ENCODE measurements at regions of chr20 and their contacts with region 1.

Region 1: DNA sequence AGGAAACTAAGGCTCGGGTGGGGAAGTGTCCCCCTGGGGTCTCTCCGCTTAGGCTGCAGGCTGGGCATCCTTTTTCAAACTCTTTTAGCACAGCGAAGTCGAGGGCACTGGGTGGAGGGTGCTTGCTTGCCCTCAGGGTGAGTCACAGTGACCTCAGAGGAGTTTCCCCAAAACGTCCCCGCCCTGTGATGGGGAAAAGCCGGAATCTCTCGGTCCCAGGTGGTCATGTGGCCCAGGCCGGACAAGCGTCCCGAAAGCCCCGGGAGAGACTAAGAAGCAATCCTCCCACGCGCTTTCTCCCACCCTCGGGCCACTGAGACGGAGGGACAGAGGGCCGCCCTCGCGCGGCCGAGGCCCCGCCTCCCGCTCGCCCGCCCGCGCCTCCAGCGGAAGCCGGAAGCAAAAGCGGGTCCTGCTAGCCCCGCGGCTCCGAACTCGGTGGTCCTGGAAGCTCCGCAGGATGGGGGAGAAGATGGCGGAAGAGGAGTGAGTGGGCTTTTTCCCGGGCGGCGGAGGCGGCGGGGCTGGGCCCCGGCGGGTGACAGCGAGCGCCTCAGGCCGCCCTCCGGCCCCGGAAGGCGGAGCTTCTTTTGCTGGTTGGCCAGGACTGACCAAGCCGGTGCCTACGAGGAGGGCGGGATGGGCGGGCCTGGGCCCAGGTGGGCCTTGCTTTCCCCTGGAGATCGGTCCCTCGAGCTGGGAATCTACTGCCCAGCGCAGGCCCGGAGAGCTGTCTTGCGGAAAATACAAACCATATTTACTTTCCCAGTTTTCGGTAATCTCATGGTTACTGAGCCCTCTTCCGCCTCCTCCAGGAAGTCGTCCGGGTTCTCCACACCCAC is at the start of gene SLC9A8:
- DNase-seq: peak; percentile 92
- H3K4me3 Mint-ChIP-seq: peak within 1 kb of the TSS; percentile 94
- H3K27ac Mint-ChIP-seq: peak within 1 kb of the TSS; percentile 94
- H3K4me1 Mint-ChIP-seq: peaks cover 26% of the 10 kb centered on the region
- H3K27me3 Mint-ChIP-seq: no peaks in the 10 kb centered on the region
- total RNA-seq, gene SLC9A8: 11.2 to 11.4 TPM

Region 2: GRCh38 chr20:49166534-49167449 is 645.9 kb before region 1 on chr20:
- CTCF ChIA-PET with region 1: no interaction called
- intact Hi-C with region 1: loop called (anchors 10 kb)
- DNase-seq: no peak
- H3K4me3 Mint-ChIP-seq: peak overlapping the region; percentile 48
- H3K27ac Mint-ChIP-seq: peak overlapping the region; percentile 84
- H3K4me1 Mint-ChIP-seq: peaks cover 71% of the 10 kb centered on the region
- H3K27me3 Mint-ChIP-seq: no peaks in the 10 kb centered on the region

Region 3: DNA sequence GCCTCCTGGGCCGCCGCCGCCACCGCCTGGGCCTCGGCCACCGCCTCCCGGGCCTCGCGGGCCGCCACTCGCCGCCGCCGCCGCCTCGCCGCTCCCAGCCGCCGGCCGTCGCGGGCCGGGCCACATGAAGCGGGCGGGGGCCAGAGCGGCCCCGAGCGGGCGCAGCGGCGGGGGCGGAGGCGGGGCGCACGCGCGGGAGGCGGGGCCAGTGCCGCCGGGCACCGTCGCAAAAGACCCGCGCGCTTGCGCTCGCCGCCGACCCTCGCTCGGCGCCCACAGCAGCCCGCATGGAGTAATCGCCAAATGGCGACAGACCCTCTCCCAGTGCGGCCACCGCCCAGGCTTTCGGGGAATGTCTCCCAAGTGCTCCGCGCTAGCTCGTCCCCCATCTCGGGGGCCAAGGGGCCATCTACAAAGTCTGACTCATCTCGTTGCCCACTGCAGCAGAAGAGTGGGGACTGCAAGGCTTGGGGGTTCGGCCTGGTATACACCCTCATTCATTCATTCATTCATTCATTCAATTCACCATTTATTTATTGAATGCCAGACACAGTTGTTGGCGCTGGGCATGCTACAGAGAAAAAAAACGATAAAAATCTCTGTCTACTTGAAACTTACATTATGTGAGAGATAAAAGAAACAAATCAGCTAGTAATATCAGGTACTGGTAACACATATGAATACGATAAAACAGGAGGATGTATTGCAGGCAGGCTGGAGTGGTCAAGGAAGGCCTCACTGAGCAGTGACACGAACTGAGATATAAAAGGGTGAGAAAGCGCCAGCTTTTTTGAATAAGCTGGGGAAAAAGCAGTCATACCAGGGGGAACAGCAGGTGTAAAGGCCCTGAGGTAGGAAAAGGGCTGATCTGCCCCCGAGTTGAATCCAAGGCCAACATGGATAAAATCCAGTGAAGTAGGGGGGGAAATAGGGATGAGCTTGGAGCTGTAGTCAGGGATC is 98.7 kb before region 1 on chr20 and contains the start of gene B4GALT5:
- CTCF ChIA-PET with region 1: no interaction called
- intact Hi-C with region 1: loop called (anchors 5 kb)
- DNase-seq: peak; percentile 50
- H3K4me3 Mint-ChIP-seq: peak within 1 kb of the TSS; percentile 87
- H3K27ac Mint-ChIP-seq: peak within 1 kb of the TSS; percentile 86
- H3K4me1 Mint-ChIP-seq: peaks cover 42% of the 10 kb centered on the region
- H3K27me3 Mint-ChIP-seq: peaks cover 3% of the 10 kb centered on the region
- total RNA-seq, gene B4GALT5: 18.6 to 19.0 TPM

Region 4: GRCh38 chr20:49775229-49775693 is 37.4 kb before region 1 on chr20:
- CTCF ChIA-PET with region 1: interaction called, 8 read pairs
- intact Hi-C with region 1: loop called (anchors 5 kb)
- DNase-seq: no peak
- H3K4me3 Mint-ChIP-seq: no peak overlapping the region
- H3K27ac Mint-ChIP-seq: no peak overlapping the region
- H3K4me1 Mint-ChIP-seq: peaks cover 24% of the 10 kb centered on the region
- H3K27me3 Mint-ChIP-seq: peaks cover 16% of the 10 kb centered on the region

Region 5: DNA sequence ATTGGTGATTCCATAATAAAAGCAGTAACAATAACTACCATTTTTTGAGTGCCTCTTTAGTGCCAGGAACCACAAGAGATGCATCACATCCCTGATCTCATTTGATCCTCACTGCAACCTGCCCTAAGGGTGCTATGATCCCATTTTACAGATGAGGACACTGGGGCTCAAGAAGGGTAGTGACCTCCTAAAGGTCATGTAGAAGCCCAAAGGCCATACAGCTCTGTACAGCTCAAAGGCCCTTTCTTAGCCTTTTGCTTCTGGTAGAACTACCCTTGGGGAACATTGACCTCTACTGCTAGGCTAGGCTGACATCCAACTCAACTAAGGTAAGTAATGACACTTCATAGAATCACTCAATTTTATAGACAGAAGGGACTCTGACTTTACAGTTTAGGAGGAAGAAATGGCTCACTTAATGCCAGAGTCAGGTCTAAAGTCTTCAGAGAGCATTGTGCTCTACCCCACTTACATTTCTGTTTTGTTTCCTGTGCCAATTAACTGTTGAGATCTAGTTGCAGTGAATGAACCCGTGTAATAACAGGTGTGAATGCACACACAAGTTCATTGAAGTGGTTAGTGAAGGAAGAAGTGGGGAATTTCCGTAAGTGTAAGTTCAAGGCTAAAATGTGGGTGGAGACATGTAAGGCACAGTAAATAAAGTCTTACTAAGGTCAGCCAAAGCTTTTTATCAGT is 10.6 kb after region 1 on chr20:
- CTCF ChIA-PET with region 1: interaction called, 4 read pairs
- intact Hi-C with region 1: loop called (anchors 1 kb)
- DNase-seq: no peak
- H3K4me3 Mint-ChIP-seq: peak overlapping the region; percentile 3
- H3K27ac Mint-ChIP-seq: peak overlapping the region; percentile 84
- H3K4me1 Mint-ChIP-seq: peaks cover 45% of the 10 kb centered on the region
- H3K27me3 Mint-ChIP-seq: no peaks in the 10 kb centered on the region

Region 6: DNA sequence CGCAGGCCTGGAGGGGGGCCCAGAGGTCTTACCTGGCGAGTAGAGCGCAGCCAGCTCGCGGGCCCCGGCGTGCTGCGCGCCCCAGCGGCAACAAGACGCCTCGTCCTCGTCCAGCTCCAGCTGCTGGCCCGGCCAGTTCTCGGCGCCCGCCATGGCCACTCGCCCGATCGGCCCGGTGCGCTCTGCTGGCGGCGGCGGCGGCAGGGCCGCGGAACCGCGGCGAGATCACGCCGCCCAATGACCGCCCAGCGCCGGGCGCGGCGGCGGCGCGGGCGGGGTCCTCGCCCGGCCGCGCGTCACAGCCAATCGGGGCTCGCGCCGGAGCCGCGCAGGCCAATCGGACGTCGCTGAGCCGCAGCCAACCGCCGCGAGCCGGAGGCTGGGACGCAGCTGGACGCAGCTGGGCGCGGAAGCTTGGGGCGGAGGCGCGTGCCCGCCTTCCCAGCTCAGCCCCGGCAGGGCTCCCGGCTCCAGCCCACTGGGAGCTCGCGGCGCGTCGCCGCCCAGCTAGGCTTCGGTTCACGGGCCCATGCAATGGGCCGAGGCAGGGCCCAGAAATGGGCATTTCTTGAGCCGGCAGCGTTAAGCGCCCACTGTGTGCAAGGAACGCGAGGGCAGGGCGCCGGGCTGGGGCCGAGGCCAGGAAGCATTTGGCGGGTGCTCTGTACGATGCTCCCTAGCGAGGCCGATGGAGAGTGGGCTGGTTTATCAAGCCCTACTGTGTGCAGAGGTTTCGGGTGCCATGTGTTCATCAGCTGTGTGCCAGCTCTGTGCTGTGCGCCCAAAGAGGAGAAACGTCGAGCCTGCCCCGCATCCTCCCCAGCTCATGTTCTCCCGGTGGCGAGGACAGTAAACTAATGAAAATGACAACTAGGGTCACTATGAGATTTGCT is 341.0 kb after region 1 on chr20 and contains the start of gene PEDS1:
- CTCF ChIA-PET with region 1: no interaction called
- intact Hi-C with region 1: loop called (anchors 10 kb)
- DNase-seq: peak; percentile 87
- H3K4me3 Mint-ChIP-seq: peak within 1 kb of the TSS; percentile 75
- H3K27ac Mint-ChIP-seq: peak within 1 kb of the TSS; percentile 84
- H3K4me1 Mint-ChIP-seq: peaks cover 39% of the 10 kb centered on the region
- H3K27me3 Mint-ChIP-seq: no peaks in the 10 kb centered on the region
- total RNA-seq, gene PEDS1: 10.4 to 11.2 TPM